Natural killer cell (primary cell): ENCODE measurements at regions of chr1 and their contacts with region 1.

Region 1: DNA sequence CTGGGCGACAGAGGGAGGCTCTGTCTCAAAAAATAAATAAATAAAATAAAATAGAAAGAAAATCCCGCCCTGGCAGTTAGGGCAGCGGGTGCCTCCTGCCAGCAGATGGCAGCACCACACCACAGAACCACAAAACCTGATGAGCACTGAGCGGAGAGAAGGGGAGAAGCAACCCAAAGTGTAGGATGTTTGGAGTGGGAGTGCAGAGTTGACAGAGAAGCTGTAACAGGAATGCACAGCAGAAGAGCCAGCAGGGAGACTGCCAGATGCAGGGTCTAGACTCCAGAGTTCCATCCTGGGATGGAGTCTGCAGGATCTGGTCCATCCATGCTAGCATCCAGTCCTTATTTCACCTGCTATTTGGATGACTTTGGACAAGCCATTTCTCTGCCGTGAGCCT is 29.7 kb upstream of the KIRREL1 start:
- DNase-seq: peak; percentile 41 to 69
- ATAC-seq: peak; percentile 50 to 76 (median 54)
- H3K4me3 ChIP-seq: no peak overlapping the region
- H3K4me3 Mint-ChIP-seq: no peak overlapping the region
- H3K27ac ChIP-seq: no peak overlapping the region
- H3K27ac Mint-ChIP-seq: no peak overlapping the region
- H3K4me1 ChIP-seq: no peaks in the 10 kb centered on the region
- H3K4me1 Mint-ChIP-seq: no peaks in the 10 kb centered on the region
- H3K27me3 ChIP-seq: no peaks in the 10 kb centered on the region
- H3K27me3 Mint-ChIP-seq: peaks cover 9 to 38% of the 10 kb centered on the region in 2 donors
- CTCF ChIP-seq: peak; percentile 83

Region 2: DNA sequence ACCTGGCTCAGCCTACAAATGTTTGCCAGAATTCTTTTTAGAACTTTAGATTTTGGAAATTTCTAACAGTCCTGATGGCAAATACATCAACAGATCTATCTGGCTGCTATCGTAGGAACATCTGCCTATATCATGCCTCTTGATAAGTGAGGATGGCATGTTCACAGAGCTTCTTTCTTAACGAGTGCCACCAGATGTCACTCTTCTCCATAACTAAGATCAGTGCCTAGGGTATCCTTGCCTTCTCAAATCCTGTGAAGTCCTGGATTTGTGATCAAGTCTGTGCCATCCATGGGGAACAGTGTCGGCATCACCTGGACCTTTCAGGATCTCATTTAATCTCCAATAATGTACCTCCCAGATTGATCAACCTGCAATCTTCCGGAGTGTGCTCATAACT is 85.7 kb before region 1 on chr1:
- intact Hi-C with region 1: no loop called
- DNase-seq: peak in 1 of 2 donors; percentile 4
- ATAC-seq: no peak
- H3K4me3 ChIP-seq: no peak overlapping the region
- H3K4me3 Mint-ChIP-seq: no peak overlapping the region
- H3K27ac ChIP-seq: no peak overlapping the region
- H3K27ac Mint-ChIP-seq: no peak overlapping the region
- H3K4me1 ChIP-seq: no peaks in the 10 kb centered on the region
- H3K4me1 Mint-ChIP-seq: no peaks in the 10 kb centered on the region
- H3K27me3 ChIP-seq: peaks cover 3% of the 10 kb centered on the region
- H3K27me3 Mint-ChIP-seq: peaks cover 25 to 44% of the 10 kb centered on the region in 2 donors
- CTCF ChIP-seq: no peak

Region 3: GRCh38 chr1:158035976-158036583 is 72.4 kb after region 1 on chr1:
- intact Hi-C with region 1: loop called (anchors 5 kb)
- DNase-seq: peak in 1 of 2 donors; percentile 33
- ATAC-seq: no peak
- H3K4me3 ChIP-seq: no peak overlapping the region
- H3K4me3 Mint-ChIP-seq: no peak overlapping the region
- H3K27ac ChIP-seq: no peak overlapping the region
- H3K27ac Mint-ChIP-seq: no peak overlapping the region
- H3K4me1 ChIP-seq: no peaks in the 10 kb centered on the region
- H3K4me1 Mint-ChIP-seq: no peaks in the 10 kb centered on the region
- H3K27me3 ChIP-seq: no peaks in the 10 kb centered on the region
- H3K27me3 Mint-ChIP-seq: peaks cover 10 to 31% of the 10 kb centered on the region in 2 donors
- CTCF ChIP-seq: peak; percentile 63